Mammary epithelial cell (primary cell): ENCODE measurements at regions of chr13 and their contacts with region 1.

Region 1: DNA sequence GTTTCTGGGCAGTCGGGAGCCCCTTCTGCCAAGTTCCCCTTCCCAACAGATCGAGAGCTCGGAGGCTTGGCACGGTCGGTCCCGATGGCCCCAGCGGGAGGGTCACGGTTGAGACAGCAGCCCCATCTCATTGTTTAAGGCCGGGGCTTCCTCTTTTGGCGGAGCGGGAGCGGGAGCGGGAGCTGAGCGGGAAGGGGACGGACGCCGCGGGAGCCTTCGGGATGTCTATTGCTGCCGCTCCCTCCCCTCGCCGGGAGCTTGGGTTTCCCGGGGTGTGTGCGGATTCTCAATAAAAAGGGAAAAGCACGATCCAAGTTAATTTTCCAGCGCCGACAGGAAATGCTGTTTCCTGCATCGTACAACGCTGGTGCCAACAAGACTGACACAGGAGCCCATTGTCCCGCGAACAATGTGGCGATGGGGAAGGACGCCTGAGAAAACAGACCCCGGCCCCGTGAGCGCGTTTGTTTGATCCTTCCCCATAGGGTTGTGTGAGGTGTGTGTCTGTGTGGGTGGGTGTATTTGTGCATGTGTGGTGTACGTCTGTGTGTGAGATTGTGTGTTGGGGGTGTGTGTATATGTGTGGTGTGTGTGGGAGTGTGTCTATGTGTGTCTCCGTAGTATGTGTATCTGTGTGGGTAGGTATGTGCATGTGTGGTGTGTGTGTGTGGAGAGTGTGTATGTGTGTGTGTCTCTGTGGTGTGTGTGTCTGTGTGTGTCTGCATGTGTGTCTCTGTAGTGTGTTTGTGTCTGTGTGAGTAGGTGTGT is 36.3 kb upstream of the FLT1 start:
- DNase-seq: no peak
- H3K4me3 ChIP-seq: no peak overlapping the region
- H3K27ac ChIP-seq: no peak overlapping the region
- H3K4me1 ChIP-seq: no peaks in the 10 kb centered on the region
- H3K27me3 ChIP-seq: peaks cover 36% of the 10 kb centered on the region
- CTCF ChIP-seq: no peak

Region 2: GRCh38 chr13:28449826-28450773 is 81.2 kb before region 1 on chr13:
- CTCF ChIA-PET with region 1: no interaction called
- dilution Hi-C with region 1: loop called (anchors 5 kb)
- in situ Hi-C with region 1: no loop called
- intact Hi-C with region 1: no loop called
- DNase-seq: no peak
- H3K4me3 ChIP-seq: no peak overlapping the region
- H3K27ac ChIP-seq: no peak overlapping the region
- H3K4me1 ChIP-seq: no peaks in the 10 kb centered on the region
- H3K27me3 ChIP-seq: no peaks in the 10 kb centered on the region
- CTCF ChIP-seq: no peak

Region 3: GRCh38 chr13:28475916-28476725 is 55.1 kb before region 1 on chr13:
- CTCF ChIA-PET with region 1: no interaction called
- dilution Hi-C with region 1: loop called (anchors 10 kb)
- in situ Hi-C with region 1: no loop called
- intact Hi-C with region 1: no loop called
- DNase-seq: peak; percentile 53
- H3K4me3 ChIP-seq: no peak overlapping the region
- H3K27ac ChIP-seq: no peak overlapping the region
- H3K4me1 ChIP-seq: no peaks in the 10 kb centered on the region
- H3K27me3 ChIP-seq: no peaks in the 10 kb centered on the region
- CTCF ChIP-seq: no peak